Transverse colon (tissue), 4 donors: ENCODE measurements at regions of chr2 and their contacts with region 1.

Region 1: GRCh38 chr2:126797622-126798275 is 100.9 kb upstream of the TEX51 start:
- DNase-seq: no peak
- H3K4me3 ChIP-seq: no peak overlapping the region
- H3K27ac ChIP-seq: no peak overlapping the region
- H3K4me1 ChIP-seq: peaks cover 0 to 3% (median 0%) of the 10 kb centered on the region in 4 donors
- H3K27me3 ChIP-seq: peaks cover 3% of the 10 kb centered on the region
- CTCF ChIP-seq: no peak
- EP300 ChIP-seq: no peak
- POLR2A ChIP-seq: no peak

Region 2: DNA sequence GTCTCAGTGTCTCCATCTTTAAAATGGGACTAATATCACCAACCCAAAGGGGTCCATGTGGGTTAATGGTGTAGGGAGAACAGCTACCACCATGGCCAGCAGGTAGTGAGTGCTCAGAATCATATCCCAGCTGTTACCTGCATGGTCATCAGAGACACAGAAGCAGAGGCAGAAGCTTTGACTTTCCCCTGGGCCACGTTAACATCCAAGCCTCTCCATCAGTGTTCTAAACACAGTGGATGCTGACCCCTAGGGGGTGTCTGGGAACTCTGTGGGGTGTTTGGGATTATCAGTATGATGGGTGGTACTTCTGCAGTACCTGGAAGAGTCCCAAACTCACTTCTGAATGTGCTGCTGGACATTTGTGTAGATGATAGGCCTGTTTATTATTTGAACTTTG is 48.2 kb before region 1 on chr2:
- in situ Hi-C with region 1: no loop called
- intact Hi-C with region 1: loop called (anchors 2 kb)
- DNase-seq: no peak
- H3K4me3 ChIP-seq: no peak overlapping the region
- H3K27ac ChIP-seq: no peak overlapping the region
- H3K4me1 ChIP-seq: no peaks in the 10 kb centered on the region
- H3K27me3 ChIP-seq: no peaks in the 10 kb centered on the region
- CTCF ChIP-seq: no peak
- EP300 ChIP-seq: no peak
- POLR2A ChIP-seq: no peak